Activated CD4-positive, alpha-beta memory T cell treated with anti-CD3 and anti-CD28 coated beads for 36 hours (primary cell): ENCODE measurements at regions of chr7 and their contacts with region 1.

Region 1: GRCh38 chr7:91089382-91089963 is 174.8 kb upstream of the FZD1 start:
- DNase-seq: no peak
- H3K4me3 Mint-ChIP-seq: no peak overlapping the region
- H3K27ac Mint-ChIP-seq: no peak overlapping the region
- H3K4me1 Mint-ChIP-seq: peaks cover 10% of the 10 kb centered on the region
- H3K27me3 Mint-ChIP-seq: peaks cover 1% of the 10 kb centered on the region

Region 2: GRCh38 chr7:91264046-91264923 is 174.8 kb after region 1 on chr7 and contains the start of gene FZD1:
- CTCF ChIA-PET with region 1: no interaction called
- POLR2A ChIA-PET with region 1: no interaction called
- intact Hi-C with region 1: loop called (anchors 5 kb)
- DNase-seq: peak; percentile 79
- H3K4me3 Mint-ChIP-seq: peak within 1 kb of the TSS; percentile 64
- H3K27ac Mint-ChIP-seq: no peak within 1 kb of the TSS
- H3K4me1 Mint-ChIP-seq: peaks cover 1% of the 10 kb centered on the region
- H3K27me3 Mint-ChIP-seq: peaks cover 54% of the 10 kb centered on the region
- total RNA-seq, gene FZD1: 0.05 TPM in 1 of 2 experiments, not detected in the other